ENCODE measurements at regions of chr17 and their contacts with region 1.

Region 1: GRCh38 chr17:7989781-7990655 is 12.4 kb upstream of the GUCY2D start:
- DNase-seq: no peak
- H3K4me3 ChIP-seq: peak overlapping the region; percentile 74
- H3K27me3 ChIP-seq: peaks cover 2% of the 10 kb centered on the region; the same call in 1 of the 2 replicates
- CTCF ChIP-seq: peak; percentile 98

Region 2: GRCh38 chr17:7825206-7825990 is 164.6 kb before region 1 on chr17:
- CTCF ChIA-PET with region 1: interaction called, 16 read pairs
- POLR2A ChIA-PET with region 1: no interaction called
- DNase-seq: no peak
- H3K4me3 ChIP-seq: no peak overlapping the region
- H3K27me3 ChIP-seq: peaks cover 5% of the 10 kb centered on the region
- CTCF ChIP-seq: no peak

Region 3: DNA sequence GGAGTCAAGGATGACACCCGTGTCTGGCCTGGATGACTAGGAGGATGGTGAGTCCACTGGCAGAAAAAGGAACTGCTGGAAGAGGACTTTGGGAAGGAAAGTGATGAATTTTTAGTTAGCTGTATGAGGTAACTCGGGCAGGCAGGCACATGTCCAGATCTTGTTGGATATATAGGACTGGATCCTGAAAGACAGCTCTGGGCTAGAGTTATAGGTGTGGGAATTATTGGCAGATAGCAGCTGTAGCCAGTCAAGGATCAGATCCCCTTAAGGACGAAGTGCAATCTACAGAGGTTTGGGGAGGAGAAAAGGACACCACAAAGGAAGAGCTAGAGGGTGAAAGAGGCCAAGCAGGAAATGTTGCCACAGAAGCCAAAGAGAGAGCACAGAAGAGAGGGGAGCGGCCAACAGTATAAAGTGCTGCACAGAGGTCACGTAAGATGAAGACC is 122.1 kb before region 1 on chr17:
- CTCF ChIA-PET with region 1: interaction called, 32 read pairs
- POLR2A ChIA-PET with region 1: no interaction called
- DNase-seq: no peak
- H3K4me3 ChIP-seq: no peak overlapping the region
- H3K27me3 ChIP-seq: no peaks in the 10 kb centered on the region
- CTCF ChIP-seq: no peak

Region 4: DNA sequence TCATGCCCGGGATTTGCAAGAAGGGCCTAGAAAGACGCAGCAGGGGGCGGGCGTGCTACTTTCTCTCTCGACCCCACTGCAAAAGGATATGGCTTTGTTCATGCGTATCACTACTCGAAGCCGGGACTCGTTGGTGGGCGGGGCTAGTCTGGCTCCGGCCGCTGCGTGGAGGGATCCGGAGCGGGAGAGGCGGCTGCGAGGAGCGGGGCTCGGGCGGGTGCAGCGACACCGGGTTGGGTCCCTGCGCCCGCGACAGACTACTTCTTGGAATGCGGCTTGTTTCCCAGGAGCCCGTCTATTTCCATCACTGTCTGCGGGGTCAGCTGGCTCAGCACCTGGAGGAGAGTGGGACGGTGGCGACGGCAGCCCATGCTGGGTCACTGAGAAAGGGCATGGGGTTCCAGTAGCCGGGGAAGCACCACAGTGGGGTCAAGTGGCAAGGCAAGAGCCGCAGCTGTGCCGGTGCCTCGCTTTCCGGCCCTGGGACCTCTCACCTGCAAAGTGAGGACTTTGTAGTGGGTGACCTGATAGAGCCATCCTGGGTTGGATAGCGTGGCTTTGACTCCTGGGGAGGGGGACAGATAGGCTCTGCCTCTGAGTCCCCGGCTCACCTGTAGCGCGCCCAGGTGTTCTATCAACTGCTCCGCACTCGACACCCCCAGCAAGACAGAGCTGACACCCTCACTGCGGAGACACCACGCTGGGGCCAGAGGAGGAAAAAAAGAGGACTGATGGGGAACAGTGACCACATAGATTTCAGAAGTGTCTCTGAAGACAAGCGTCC is 67.0 kb before region 1 on chr17:
- CTCF ChIA-PET with region 1: interaction called, 109 read pairs
- POLR2A ChIA-PET with region 1: no interaction called
- DNase-seq: no peak
- H3K4me3 ChIP-seq: peak overlapping the region; percentile 47
- H3K27me3 ChIP-seq: no peaks in the 10 kb centered on the region
- CTCF ChIP-seq: no peak

Region 5: GRCh38 chr17:8005960-8006730 is 16.1 kb after region 1 on chr17:
- CTCF ChIA-PET with region 1: interaction called, 26 read pairs
- POLR2A ChIA-PET with region 1: no interaction called
- DNase-seq: no peak
- H3K4me3 ChIP-seq: no peak overlapping the region
- H3K27me3 ChIP-seq: peaks cover 19% of the 10 kb centered on the region
- CTCF ChIP-seq: no peak

Region 6: DNA sequence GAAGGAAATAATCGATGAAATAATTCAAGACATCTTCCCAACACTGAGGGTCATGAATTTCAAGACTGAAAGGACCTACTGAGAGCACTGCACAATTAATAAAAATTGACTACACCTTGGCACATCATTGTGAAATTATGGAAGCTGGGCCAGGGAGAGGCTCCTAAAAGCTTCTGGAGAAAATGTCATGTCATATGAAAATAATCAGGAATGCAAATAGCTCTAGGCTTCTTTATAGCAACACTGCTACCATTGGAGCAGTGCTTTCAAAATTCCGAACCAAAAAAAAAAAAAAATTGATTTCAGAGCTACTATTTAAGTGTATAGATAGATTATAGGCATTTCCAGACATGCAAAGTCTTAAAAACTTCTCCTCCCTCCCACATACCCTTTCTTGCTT is 42.4 kb after region 1 on chr17:
- CTCF ChIA-PET with region 1: no interaction called
- POLR2A ChIA-PET with region 1: no interaction called
- DNase-seq: no peak
- H3K4me3 ChIP-seq: no peak overlapping the region
- H3K27me3 ChIP-seq: peaks cover 2% of the 10 kb centered on the region; the same call in 1 of the 2 replicates
- CTCF ChIP-seq: no peak

Region 7: DNA sequence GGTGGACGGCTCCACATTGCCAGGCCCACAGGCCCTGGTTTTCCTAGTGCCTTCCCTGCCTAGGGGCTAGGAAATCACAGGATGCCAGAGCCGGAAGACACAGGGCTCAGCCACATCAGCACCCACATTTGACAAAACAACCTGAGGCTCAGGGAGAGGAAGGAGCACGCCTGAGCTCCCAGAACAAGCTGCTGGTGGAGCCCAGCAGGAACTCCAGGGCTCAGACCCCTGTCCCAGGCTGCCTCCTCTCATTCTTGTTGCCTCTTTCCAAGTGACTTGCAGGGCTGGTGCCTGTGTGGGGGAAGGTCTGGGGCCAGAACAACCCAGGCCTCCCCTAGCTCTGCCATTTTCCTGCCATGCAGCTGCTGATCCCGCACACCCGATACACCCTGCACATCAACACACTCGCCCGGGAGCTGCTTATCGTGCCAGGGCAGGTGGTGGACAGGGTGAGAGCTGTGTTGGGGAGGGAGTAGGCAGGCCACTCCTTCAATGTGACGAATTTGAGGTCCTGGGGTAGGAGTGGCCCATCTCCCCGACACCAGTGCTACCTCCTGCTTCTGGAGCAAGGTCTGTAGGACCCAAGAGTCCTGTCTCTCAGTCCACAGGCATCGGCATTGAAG is 56.4 kb after region 1 on chr17:
- CTCF ChIA-PET with region 1: interaction called, 37 read pairs
- POLR2A ChIA-PET with region 1: no interaction called
- DNase-seq: no peak
- H3K4me3 ChIP-seq: no peak overlapping the region
- H3K27me3 ChIP-seq: peaks cover 22% of the 10 kb centered on the region
- CTCF ChIP-seq: no peak

Region 8: GRCh38 chr17:8126531-8127066 is 136.6 kb after region 1 on chr17:
- CTCF ChIA-PET with region 1: no interaction called
- POLR2A ChIA-PET with region 1: no interaction called
- DNase-seq: no peak
- H3K4me3 ChIP-seq: peak overlapping the region; percentile 56
- H3K27me3 ChIP-seq: no peaks in the 10 kb centered on the region; the same call in 1 of the 2 replicates
- CTCF ChIP-seq: no peak

Measured in BJ (cell line).